ENCODE measurements at regions of chrX and their contacts with region 1.

Region 1: DNA sequence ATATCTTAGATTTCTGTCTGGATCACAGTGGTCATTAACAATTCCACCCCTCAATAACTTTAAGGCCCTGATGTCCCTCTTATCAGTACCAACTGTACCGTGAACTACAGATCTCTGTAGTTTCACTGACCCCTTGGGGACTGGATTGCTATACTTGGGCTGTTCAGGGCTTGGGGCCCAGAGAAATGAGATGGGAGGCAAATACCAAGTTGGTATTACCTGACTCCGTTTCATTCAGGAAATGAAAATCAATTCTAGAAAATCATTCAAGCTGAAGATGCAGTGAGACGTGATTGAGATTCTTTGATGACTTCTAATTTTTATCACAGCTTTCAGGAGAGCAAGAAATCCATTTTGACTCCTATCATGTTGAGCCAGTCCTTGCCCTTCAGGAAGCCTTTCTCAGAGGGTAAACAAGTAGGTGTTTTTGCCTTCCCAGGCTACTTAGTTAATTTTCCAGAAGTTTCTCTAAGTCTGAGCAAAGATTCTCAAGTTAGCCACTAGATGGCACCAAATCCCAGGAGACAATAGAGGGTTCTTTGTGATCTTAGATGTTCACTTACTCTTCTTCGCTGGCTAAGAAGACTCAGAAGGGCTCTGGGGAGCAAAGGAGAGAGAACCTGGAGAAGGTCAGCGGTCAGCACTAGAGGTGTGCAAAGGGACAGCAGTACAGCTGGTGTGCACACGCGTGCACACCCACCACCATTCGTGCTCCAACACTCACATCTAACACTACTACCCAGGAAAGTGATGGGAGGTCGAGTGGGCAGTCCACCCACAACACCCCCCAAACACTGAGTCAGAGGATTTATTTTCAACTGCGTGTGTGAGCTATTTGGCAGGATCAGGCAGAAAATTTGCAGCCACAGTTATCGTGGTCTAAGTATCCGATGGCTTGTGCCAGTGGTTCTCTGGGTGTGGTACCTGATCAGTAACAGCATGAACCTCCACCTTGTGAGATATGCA is 7.4 kb downstream of the HNRNPH2 start:
- DNase-seq: peak; percentile 78
- H3K4me3 ChIP-seq: no peak overlapping the region
- H3K27ac ChIP-seq: no peak overlapping the region
- H3K4me1 ChIP-seq: peaks cover 15% of the 10 kb centered on the region
- H3K27me3 ChIP-seq: no peaks in the 10 kb centered on the region
- CTCF ChIP-seq: peak; percentile 33 to 45
- POLR2A ChIP-seq: no peak

Region 2: GRCh38 chrX:101230636-101231035 is 184.8 kb before region 1 on chrX:
- CTCF ChIA-PET with region 1: no interaction called
- POLR2A ChIA-PET with region 1: no interaction called
- dilution Hi-C with region 1: no loop called
- intact Hi-C with region 1: no loop called
- DNase-seq: no peak
- H3K4me3 ChIP-seq: no peak overlapping the region
- H3K27ac ChIP-seq: no peak overlapping the region
- H3K4me1 ChIP-seq: peaks cover 6% of the 10 kb centered on the region
- H3K27me3 ChIP-seq: no peaks in the 10 kb centered on the region
- CTCF ChIP-seq: no peak
- POLR2A ChIP-seq: no peak

Region 3: DNA sequence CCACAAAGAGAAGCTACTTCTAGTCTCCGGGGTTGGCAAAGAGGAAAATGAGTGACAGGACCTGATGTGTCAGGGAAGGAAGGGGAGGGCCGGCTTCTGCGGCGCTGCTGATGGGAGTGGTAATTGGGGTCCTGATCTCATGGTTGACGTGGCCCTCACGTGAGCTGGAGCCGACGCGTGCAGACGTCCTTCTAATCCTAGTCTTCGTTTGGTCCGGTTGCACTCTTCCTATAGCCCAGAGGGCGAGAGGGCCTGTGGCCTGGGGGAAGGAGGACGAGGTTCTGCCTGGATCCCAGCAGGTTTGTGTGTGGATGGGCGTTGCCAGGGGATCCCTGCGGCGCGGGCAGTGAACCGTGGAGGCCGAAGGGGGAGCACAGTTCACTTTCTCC is 134.9 kb after region 1 on chrX and contains the start of gene ARMCX1:
- CTCF ChIA-PET with region 1: no interaction called
- POLR2A ChIA-PET with region 1: interaction called, 3 read pairs
- dilution Hi-C with region 1: no loop called
- intact Hi-C with region 1: loop called (anchors 2 kb)
- DNase-seq: peak; percentile 87
- H3K4me3 ChIP-seq: peak within 1 kb of the TSS; percentile 58 to 88 (median 87)
- H3K27ac ChIP-seq: peak within 1 kb of the TSS; percentile 86
- H3K4me1 ChIP-seq: peaks cover 2% of the 10 kb centered on the region
- H3K27me3 ChIP-seq: no peaks in the 10 kb centered on the region
- CTCF ChIP-seq: no peak
- POLR2A ChIP-seq: peak; percentile 91
- total RNA-seq, gene ARMCX1: 19.9 and 22.4 TPM in 2 replicates

Region 4: DNA sequence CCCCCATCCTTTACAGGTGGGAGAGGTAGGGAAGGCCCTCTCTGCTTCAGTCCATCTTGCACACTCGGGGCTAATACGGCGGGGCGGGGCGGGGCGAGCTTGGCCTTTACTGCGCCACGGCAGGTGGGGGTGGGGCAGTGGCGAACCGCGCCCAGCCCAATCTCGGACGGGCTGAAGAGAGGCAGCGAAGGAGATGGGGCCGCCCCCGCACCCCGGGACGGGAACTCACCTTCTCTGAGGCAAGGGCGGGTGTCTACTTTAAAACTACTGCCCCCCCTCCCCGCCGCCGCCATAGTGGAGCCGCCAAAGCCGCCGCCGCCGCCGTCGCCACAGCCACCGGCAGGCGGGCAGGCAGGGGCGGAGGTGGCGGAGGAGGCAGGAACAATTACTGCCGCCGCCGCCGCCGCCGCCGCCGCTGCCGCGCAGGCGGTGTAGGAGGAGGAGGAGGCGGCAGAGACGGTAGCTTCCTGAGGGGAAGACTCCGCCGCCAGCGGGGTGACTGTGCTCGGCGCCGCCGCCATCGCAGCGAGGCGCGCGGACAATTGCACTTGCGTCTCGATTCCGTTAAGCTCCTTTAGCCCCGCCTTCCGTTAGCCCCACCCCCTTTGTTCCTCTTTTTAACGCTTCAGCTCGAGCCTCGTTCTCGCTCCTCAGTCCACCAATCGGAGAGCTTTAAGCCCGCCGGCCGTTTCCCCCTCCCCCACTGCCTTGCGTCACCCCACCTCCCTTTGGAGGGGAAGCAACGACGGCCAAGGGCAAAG is 516.2 kb after region 1 on chrX and contains the start of gene ZMAT1:
- CTCF ChIA-PET with region 1: no interaction called
- POLR2A ChIA-PET with region 1: no interaction called
- dilution Hi-C with region 1: no loop called
- intact Hi-C with region 1: loop called (anchors 5 kb)
- DNase-seq: peak; percentile 94
- H3K4me3 ChIP-seq: peak within 1 kb of the TSS; percentile 23 to 58 (median 46)
- H3K27ac ChIP-seq: peak within 1 kb of the TSS; percentile 63
- H3K4me1 ChIP-seq: peaks cover 5% of the 10 kb centered on the region
- H3K27me3 ChIP-seq: no peaks in the 10 kb centered on the region
- CTCF ChIP-seq: no peak
- POLR2A ChIP-seq: peak; percentile 65
- total RNA-seq, gene ZMAT1: 3.7 and 4.3 TPM in 2 replicates

Measured in endothelial cell of umbilical vein (primary cell).